Prostate gland (tissue), 2 donors: ENCODE measurements at regions of chr1 and their contacts with region 1.

Region 1: DNA sequence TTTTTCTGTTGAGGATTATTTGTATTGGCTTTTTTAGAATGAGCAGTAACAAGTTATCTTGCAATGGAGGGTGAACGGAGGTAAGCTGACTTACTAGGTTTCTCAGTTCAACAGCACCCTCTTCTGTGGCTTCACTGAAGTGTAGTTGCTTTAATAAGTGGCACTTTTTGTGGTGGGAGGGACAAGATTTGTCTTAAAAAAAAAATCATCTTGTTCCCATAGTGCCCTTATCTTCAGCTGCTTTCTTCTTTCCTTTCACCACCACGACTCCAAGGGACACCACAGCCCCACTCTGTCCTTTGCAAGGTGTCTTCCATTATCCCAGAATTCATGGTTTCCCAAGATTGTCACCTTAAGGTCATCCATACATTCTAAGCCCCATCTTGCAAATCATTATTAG is 92.9 kb downstream of the PIGK start:
- DNase-seq: peak; percentile 37
- H3K4me3 ChIP-seq: no peak overlapping the region
- H3K27ac ChIP-seq: no peak overlapping the region
- H3K4me1 ChIP-seq: peaks cover 6% of the 10 kb centered on the region
- H3K27me3 ChIP-seq: no peaks in the 10 kb centered on the region
- CTCF ChIP-seq: peak in 3 of 4 experiments; percentile 23 to 63 (median 53)
- POLR2A ChIP-seq: no peak

Region 2: GRCh38 chr1:75991497-75992114 is 1134.7 kb before region 1 on chr1:
- intact Hi-C with region 1: loop called (anchors 5 kb)
- DNase-seq: peak; percentile 89
- H3K4me3 ChIP-seq: no peak overlapping the region
- H3K27ac ChIP-seq: no peak overlapping the region
- H3K4me1 ChIP-seq: no peaks in the 10 kb centered on the region
- H3K27me3 ChIP-seq: no peaks in the 10 kb centered on the region
- CTCF ChIP-seq: peak; percentile 68 to 77 (median 73)
- POLR2A ChIP-seq: no peak

Region 3: GRCh38 chr1:76330991-76331603 is 795.2 kb before region 1 on chr1:
- intact Hi-C with region 1: loop called (anchors 10 kb)
- DNase-seq: peak; percentile 17
- H3K4me3 ChIP-seq: no peak overlapping the region
- H3K27ac ChIP-seq: no peak overlapping the region
- H3K4me1 ChIP-seq: no peaks in the 10 kb centered on the region
- H3K27me3 ChIP-seq: no peaks in the 10 kb centered on the region
- CTCF ChIP-seq: peak; percentile 66 to 90 (median 74)
- POLR2A ChIP-seq: no peak